ENCODE measurements at regions of chrX and their contacts with region 1.

Region 1: DNA sequence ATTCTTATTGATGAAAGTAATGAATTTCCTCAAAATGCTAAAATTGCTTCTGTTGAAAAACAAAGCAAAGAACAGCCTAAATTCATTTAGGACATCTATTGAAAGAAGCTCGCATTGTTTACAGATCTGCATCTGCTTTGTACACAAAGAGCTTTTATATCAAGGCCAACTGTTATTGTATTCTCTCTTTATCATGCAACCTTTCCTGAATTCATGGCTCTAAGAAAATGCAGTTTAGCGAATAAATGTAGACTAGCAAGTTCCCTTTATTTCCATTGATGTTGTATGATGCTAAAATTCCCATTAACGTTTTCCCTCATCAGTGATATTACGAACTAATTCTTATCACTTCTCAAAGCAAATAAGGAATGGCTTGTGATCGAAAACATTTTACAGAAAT is 446.3 kb downstream of the MID1IP1 start:
- DNase-seq: no peak
- H3K4me3 Mint-ChIP-seq: no peak overlapping the region
- H3K27ac Mint-ChIP-seq: no peak overlapping the region
- H3K4me1 Mint-ChIP-seq: no peaks in the 10 kb centered on the region
- H3K27me3 Mint-ChIP-seq: peaks cover 30% of the 10 kb centered on the region
- CTCF ChIP-seq: no peak

Region 2: DNA sequence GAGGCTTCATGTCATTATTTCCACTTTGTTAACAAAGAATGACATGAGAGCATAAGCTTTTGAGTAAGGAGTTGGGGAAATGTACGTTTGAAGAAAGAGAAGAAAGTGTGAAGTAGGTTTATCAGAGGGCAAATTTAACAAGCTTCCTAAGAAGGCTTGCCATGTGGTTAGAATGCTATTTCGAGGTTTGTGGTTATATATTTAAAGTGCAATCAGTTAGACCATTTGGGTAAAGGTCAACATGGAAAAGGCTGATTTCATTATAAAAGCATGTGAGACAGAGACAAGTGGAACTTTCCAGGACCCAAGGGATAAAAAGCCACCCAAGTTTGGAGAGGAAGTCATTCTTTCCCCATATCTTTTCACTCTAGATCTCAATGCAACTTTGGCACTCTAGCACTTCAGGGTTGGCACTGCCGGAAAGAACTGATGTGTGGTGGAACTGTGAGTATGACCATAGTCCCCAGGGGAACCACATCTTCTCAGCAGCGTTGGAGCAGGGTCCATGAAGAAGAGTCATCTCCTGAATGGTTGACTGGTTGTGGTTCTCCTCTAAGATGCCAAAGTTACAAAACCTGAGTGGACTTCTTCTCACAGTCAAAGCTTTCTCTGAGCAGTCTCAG is 83.7 kb after region 1 on chrX:
- CTCF ChIA-PET with region 1: no interaction called
- intact Hi-C with region 1: no loop called
- DNase-seq: no peak
- H3K4me3 Mint-ChIP-seq: no peak overlapping the region
- H3K27ac Mint-ChIP-seq: no peak overlapping the region
- H3K4me1 Mint-ChIP-seq: no peaks in the 10 kb centered on the region
- H3K27me3 Mint-ChIP-seq: peaks cover 68% of the 10 kb centered on the region
- CTCF ChIP-seq: no peak

Region 3: DNA sequence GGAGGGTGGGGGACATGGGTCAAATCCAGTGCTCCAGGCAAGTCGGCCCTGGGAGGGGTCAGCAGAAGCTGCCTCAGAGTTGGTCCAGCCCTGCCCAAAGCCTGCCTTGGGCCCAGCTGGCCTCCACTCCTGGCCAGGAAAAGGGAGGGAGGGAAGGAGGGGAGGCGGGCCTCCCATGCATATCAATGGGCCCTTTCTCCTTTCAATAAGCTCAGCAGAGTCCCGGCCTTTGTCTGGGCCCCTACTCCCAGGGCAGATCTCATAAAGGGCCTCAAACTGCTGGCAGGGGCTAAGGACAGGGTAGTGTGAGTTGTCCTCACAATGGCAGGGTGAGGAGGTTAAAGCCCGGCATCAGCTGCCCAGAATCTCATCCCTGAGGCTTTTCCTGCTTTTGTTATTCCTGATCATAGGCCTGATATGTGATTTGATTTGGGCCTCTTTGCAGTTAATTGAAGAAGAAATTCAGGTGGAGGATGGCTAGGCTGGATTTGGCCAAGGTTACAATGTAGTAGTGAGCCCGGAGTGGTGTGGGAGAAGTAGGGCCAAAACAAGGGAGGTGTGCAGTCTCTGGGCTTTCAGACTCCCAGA is 1212.1 kb after region 1 on chrX:
- CTCF ChIA-PET with region 1: interaction called, 10 read pairs
- intact Hi-C with region 1: no loop called
- DNase-seq: no peak
- H3K4me3 Mint-ChIP-seq: no peak overlapping the region
- H3K27ac Mint-ChIP-seq: no peak overlapping the region
- H3K4me1 Mint-ChIP-seq: no peaks in the 10 kb centered on the region
- H3K27me3 Mint-ChIP-seq: peaks cover 29% of the 10 kb centered on the region
- CTCF ChIP-seq: no peak